ENCODE measurements at regions of chr10 and their contacts with region 1.

Region 1: DNA sequence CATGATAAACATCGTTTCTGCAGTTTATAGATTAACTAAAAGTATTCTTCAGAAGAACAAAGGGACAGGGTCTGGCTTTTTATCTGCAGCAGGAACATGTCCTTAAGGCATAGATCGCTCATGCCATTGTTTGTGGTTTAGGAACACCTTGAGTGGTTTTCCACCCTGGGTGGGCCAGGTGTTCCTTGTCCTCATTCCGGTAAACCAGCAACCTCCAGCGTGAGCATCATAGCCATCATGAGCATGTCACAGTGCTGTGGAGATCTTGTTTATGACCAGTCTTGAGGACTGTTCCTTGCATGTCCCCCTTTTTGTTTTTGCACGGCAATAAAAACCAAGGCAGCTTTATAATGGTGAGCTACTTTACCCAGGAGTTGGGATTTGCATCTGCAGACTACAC is 33.9 kb downstream of the STOX1 start:
- DNase-seq: peak in 1 of 4 experiments; percentile 34
- ATAC-seq: no peak
- H3K4me3 ChIP-seq: no peak overlapping the region
- H3K27ac ChIP-seq: no peak overlapping the region
- H3K4me1 ChIP-seq: no peaks in the 10 kb centered on the region
- H3K27me3 ChIP-seq: no peaks in the 10 kb centered on the region
- CTCF ChIP-seq: no peak
- EP300 ChIP-seq: no peak
- POLR2A ChIP-seq: no peak
- RAD21 ChIP-seq: no peak

Region 2: GRCh38 chr10:68871731-68872342 is 10.6 kb after region 1 on chr10:
- CTCF ChIA-PET with region 1: no interaction called
- POLR2A ChIA-PET with region 1: interaction called, 13 read pairs
- in situ Hi-C with region 1: no loop called
- intact Hi-C with region 1: no loop called
- DNase-seq: no peak
- ATAC-seq: no peak
- H3K4me3 ChIP-seq: no peak overlapping the region
- H3K27ac ChIP-seq: no peak overlapping the region
- H3K4me1 ChIP-seq: peaks cover 2 to 6% of the 10 kb centered on the region in 2 experiments; a peak in 3 of 5 replicates
- H3K27me3 ChIP-seq: no peaks in the 10 kb centered on the region
- CTCF ChIP-seq: no peak
- EP300 ChIP-seq: no peak
- POLR2A ChIP-seq: no peak
- RAD21 ChIP-seq: no peak

Region 3: GRCh38 chr10:68938119-68938518 is 76.9 kb after region 1 on chr10:
- CTCF ChIA-PET with region 1: no interaction called
- POLR2A ChIA-PET with region 1: no interaction called
- in situ Hi-C with region 1: no loop called
- intact Hi-C with region 1: no loop called
- DNase-seq: peak in 2 of 4 experiments; percentile 23 to 28
- ATAC-seq: peak; percentile 66
- H3K4me3 ChIP-seq: no peak overlapping the region
- H3K27ac ChIP-seq: no peak overlapping the region
- H3K4me1 ChIP-seq: no peaks in the 10 kb centered on the region
- H3K27me3 ChIP-seq: no peaks in the 10 kb centered on the region
- CTCF ChIP-seq: no peak
- EP300 ChIP-seq: no peak
- POLR2A ChIP-seq: no peak
- RAD21 ChIP-seq: no peak

Region 4: GRCh38 chr10:70461215-70461986 is 1600.1 kb after region 1 on chr10:
- CTCF ChIA-PET with region 1: no interaction called
- POLR2A ChIA-PET with region 1: no interaction called
- in situ Hi-C with region 1: no loop called
- intact Hi-C with region 1: no loop called
- DNase-seq: peak; percentile 81 to 86 (median 83)
- ATAC-seq: peak; percentile 90
- H3K4me3 ChIP-seq: no peak overlapping the region
- H3K27ac ChIP-seq: no peak overlapping the region
- H3K4me1 ChIP-seq: peaks cover 5 to 15% of the 10 kb centered on the region in 2 experiments; a peak in 3 of 5 replicates
- H3K27me3 ChIP-seq: peaks cover 49 to 73% of the 10 kb centered on the region in 2 experiments
- CTCF ChIP-seq: peak; percentile 92 to 95 (median 94)
- EP300 ChIP-seq: no peak
- POLR2A ChIP-seq: no peak
- RAD21 ChIP-seq: peak; percentile 84 to 95

Measured in K562 (cell line).